IMR-90 (cell line): ENCODE measurements at regions of chr20 and their contacts with region 1.

Region 1: DNA sequence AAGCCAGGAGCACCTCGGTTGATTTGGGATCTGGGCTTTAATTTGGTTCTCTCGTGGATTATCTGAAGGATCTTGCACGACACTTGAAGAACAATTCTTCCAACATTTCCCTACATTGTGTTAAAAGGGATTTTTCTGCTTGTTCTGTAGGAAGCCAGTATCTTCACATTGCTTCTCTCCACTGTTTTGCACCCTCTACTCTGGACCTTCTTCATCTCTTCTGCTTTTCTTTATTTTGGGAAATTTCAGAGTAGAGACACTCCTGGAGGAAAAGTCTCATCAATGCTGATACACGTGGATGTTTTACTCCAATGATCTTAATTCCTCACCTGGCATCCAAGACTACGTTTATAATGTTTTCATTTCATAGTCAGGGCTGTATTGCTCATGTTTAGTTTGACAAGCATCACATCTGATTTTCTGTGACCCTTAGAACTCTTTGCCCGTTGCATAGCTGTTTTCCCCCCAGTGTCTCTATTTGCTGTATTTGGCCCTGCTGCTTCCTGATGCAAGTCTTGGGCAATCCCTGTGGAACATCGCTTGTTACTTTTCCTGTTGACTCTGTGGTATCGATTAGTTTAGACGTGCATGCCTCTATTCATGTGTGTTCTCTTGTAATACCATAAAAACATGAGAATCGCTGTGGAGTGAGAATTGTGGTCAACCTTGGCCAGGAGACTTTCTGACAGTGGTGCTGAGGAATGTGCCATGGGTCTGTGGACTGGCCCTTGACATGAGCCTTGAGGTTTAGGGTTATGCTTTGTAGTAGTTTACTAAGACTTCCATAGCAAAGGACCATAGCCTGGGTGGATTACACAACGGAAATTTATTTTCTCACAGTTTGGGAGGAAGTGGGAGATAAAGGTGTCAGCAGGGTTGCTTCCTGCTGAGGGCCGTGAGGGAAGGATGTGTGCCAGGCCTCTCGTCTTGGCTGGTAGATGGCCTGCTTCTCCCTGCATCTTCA is 12.5 kb downstream of the PLCB1 start:
- DNase-seq: peak; percentile 89
- ATAC-seq: peak; percentile 77
- H3K4me3 ChIP-seq: no peak overlapping the region
- H3K27ac ChIP-seq: no peak overlapping the region
- H3K4me1 ChIP-seq: peaks cover 5% of the 10 kb centered on the region; the same call in 1 of the 2 replicates
- H3K27me3 ChIP-seq: no peaks in the 10 kb centered on the region; the same call in 1 of the 2 replicates
- CTCF ChIP-seq: no peak
- POLR2A ChIP-seq: no peak
- RAD21 ChIP-seq: no peak

Region 2: DNA sequence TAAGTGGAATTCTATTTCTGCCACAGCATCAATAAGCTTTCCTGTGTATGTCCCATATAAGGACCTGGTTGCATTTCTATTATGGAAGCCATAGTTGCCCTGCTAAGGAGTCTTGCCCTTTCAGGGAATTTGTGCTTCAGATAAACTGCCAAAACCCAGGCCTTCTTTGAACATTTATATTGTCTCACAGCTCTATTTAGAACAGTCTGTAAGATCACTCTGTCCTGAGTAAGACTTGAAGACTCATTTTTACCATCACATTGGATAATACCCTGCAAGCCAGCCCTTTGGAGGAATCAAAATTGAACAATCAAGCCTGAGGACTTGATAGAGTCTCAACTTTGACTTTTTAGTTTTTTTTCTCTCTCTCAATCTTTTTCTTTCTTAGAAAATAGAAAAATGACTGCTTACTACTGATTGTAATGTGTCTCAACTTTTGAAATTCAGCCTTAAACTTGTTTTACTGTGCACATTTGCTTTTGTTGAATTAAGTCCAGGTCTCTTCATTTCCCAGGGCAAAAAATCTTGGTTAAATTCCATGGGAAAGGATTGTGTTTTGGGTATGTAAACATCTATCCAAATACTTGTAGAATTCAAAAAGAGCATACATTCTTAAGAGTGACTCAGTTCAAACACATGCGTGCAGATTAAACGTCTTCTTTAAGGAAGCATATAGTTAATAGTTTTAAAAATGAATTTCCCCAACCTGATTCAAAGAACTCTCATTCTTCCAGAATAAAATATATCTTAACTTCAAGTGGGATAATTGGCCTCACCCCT is 78.7 kb after region 1 on chr20:
- CTCF ChIA-PET with region 1: no interaction called
- POLR2A ChIA-PET with region 1: no interaction called
- dilution Hi-C with region 1: no loop called
- in situ Hi-C with region 1: no loop called
- intact Hi-C with region 1: loop called (anchors 5 kb)
- DNase-seq: peak; percentile 94
- ATAC-seq: peak; percentile 86
- H3K4me3 ChIP-seq: no peak overlapping the region
- H3K27ac ChIP-seq: peak overlapping the region; percentile 59
- H3K4me1 ChIP-seq: peaks cover 8% of the 10 kb centered on the region
- H3K27me3 ChIP-seq: no peaks in the 10 kb centered on the region
- CTCF ChIP-seq: no peak
- POLR2A ChIP-seq: no peak
- RAD21 ChIP-seq: no peak